B cell (primary cell): ENCODE measurements at regions of chr14 and their contacts with region 1.

Region 1: GRCh38 chr14:29927376-29928116 is at the start of gene PRKD1:
- DNase-seq: peak; percentile 30
- ATAC-seq: peak; percentile 81
- H3K4me3 ChIP-seq: peak within 1 kb of the TSS in 3 of 5 experiments; percentile 34 to 48 (median 43)
- H3K4me3 Mint-ChIP-seq: peak within 1 kb of the TSS; percentile 91
- H3K27ac ChIP-seq: no peak within 1 kb of the TSS
- H3K27ac Mint-ChIP-seq: peak within 1 kb of the TSS; percentile 80
- H3K4me1 ChIP-seq: peaks cover 6 to 9% of the 10 kb centered on the region in 2 donors
- H3K4me1 Mint-ChIP-seq: peaks cover 10% of the 10 kb centered on the region
- H3K27me3 ChIP-seq: peaks cover 0 to 25% (median 9%) of the 10 kb centered on the region in 4 experiments
- H3K27me3 Mint-ChIP-seq: peaks cover 31% of the 10 kb centered on the region
- CTCF ChIP-seq: peak; percentile 23
- total RNA-seq, gene PRKD1: 3.3 and 4.3 TPM in 2 replicates

Region 2: DNA sequence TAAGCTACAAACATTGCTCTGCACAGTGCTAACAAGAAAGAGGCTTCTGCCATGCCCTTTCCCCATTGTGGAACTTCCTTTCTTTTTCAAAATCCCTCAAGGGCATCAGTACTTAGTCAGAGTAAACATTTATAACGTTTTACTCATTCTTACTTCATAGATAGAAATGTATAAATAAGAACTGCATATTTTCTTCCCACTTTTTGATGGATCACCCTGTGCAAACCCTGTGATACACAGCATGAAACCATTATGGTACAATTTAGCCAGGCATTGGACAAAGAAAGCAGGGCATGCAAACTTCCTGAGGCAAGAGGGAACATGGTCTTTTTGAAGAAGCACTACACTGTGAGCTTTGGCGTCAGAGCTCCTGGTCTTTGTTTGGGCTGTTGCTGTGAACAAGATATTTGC is 1274.7 kb before region 1 on chr14:
- CTCF ChIA-PET with region 1: no interaction called
- POLR2A ChIA-PET with region 1: no interaction called
- intact Hi-C with region 1: no loop called
- DNase-seq: no peak
- ATAC-seq: no peak
- H3K4me3 ChIP-seq: no peak overlapping the region
- H3K4me3 Mint-ChIP-seq: no peak overlapping the region
- H3K27ac ChIP-seq: no peak overlapping the region
- H3K27ac Mint-ChIP-seq: no peak overlapping the region
- H3K4me1 ChIP-seq: no peaks in the 10 kb centered on the region
- H3K4me1 Mint-ChIP-seq: no peaks in the 10 kb centered on the region
- H3K27me3 ChIP-seq: no peaks in the 10 kb centered on the region
- H3K27me3 Mint-ChIP-seq: no peaks in the 10 kb centered on the region
- CTCF ChIP-seq: no peak

Region 3: GRCh38 chr14:29548948-29549370 is 378.6 kb before region 1 on chr14:
- CTCF ChIA-PET with region 1: no interaction called
- POLR2A ChIA-PET with region 1: no interaction called
- intact Hi-C with region 1: loop called (anchors 5 kb)
- DNase-seq: peak; percentile 31
- ATAC-seq: peak; percentile 36
- H3K4me3 ChIP-seq: no peak overlapping the region
- H3K4me3 Mint-ChIP-seq: no peak overlapping the region
- H3K27ac ChIP-seq: no peak overlapping the region
- H3K27ac Mint-ChIP-seq: no peak overlapping the region
- H3K4me1 ChIP-seq: no peaks in the 10 kb centered on the region
- H3K4me1 Mint-ChIP-seq: no peaks in the 10 kb centered on the region
- H3K27me3 ChIP-seq: no peaks in the 10 kb centered on the region
- H3K27me3 Mint-ChIP-seq: peaks cover 3% of the 10 kb centered on the region
- CTCF ChIP-seq: peak; percentile 69

Region 4: GRCh38 chr14:29576927-29577326 is 350.6 kb before region 1 on chr14:
- CTCF ChIA-PET with region 1: no interaction called
- POLR2A ChIA-PET with region 1: no interaction called
- intact Hi-C with region 1: loop called (anchors 10 kb)
- DNase-seq: no peak
- ATAC-seq: no peak
- H3K4me3 ChIP-seq: no peak overlapping the region
- H3K4me3 Mint-ChIP-seq: no peak overlapping the region
- H3K27ac ChIP-seq: no peak overlapping the region
- H3K27ac Mint-ChIP-seq: no peak overlapping the region
- H3K4me1 ChIP-seq: no peaks in the 10 kb centered on the region
- H3K4me1 Mint-ChIP-seq: peaks cover 16% of the 10 kb centered on the region
- H3K27me3 ChIP-seq: no peaks in the 10 kb centered on the region
- H3K27me3 Mint-ChIP-seq: no peaks in the 10 kb centered on the region
- CTCF ChIP-seq: no peak

Region 5: GRCh38 chr14:29788093-29788492 is 139.5 kb before region 1 on chr14:
- CTCF ChIA-PET with region 1: no interaction called
- POLR2A ChIA-PET with region 1: no interaction called
- intact Hi-C with region 1: no loop called
- DNase-seq: no peak
- ATAC-seq: no peak
- H3K4me3 ChIP-seq: no peak overlapping the region
- H3K4me3 Mint-ChIP-seq: no peak overlapping the region
- H3K27ac ChIP-seq: no peak overlapping the region
- H3K27ac Mint-ChIP-seq: no peak overlapping the region
- H3K4me1 ChIP-seq: no peaks in the 10 kb centered on the region
- H3K4me1 Mint-ChIP-seq: no peaks in the 10 kb centered on the region
- H3K27me3 ChIP-seq: no peaks in the 10 kb centered on the region
- H3K27me3 Mint-ChIP-seq: no peaks in the 10 kb centered on the region
- CTCF ChIP-seq: no peak

Region 6: GRCh38 chr14:29799464-29800095 is 128.0 kb before region 1 on chr14:
- CTCF ChIA-PET with region 1: no interaction called
- POLR2A ChIA-PET with region 1: no interaction called
- intact Hi-C with region 1: loop called (anchors 5 kb)
- DNase-seq: peak; percentile 26
- ATAC-seq: peak; percentile 84
- H3K4me3 ChIP-seq: no peak overlapping the region
- H3K4me3 Mint-ChIP-seq: peak overlapping the region; percentile 69
- H3K27ac ChIP-seq: no peak overlapping the region
- H3K27ac Mint-ChIP-seq: no peak overlapping the region
- H3K4me1 ChIP-seq: no peaks in the 10 kb centered on the region
- H3K4me1 Mint-ChIP-seq: peaks cover 17% of the 10 kb centered on the region
- H3K27me3 ChIP-seq: no peaks in the 10 kb centered on the region
- H3K27me3 Mint-ChIP-seq: no peaks in the 10 kb centered on the region
- CTCF ChIP-seq: no peak

Region 7: GRCh38 chr14:29858299-29858698 is 69.2 kb before region 1 on chr14:
- CTCF ChIA-PET with region 1: no interaction called
- POLR2A ChIA-PET with region 1: no interaction called
- intact Hi-C with region 1: loop called (anchors 1 kb)
- DNase-seq: peak; percentile 63
- ATAC-seq: peak; percentile 84
- H3K4me3 ChIP-seq: peak overlapping the region in 1 of 5 experiments; percentile 9
- H3K4me3 Mint-ChIP-seq: peak overlapping the region; percentile 73
- H3K27ac ChIP-seq: peak overlapping the region in 1 of 2 donors; percentile 74
- H3K27ac Mint-ChIP-seq: peak overlapping the region; percentile 90
- H3K4me1 ChIP-seq: peaks cover 9 to 20% of the 10 kb centered on the region in 2 donors
- H3K4me1 Mint-ChIP-seq: peaks cover 39% of the 10 kb centered on the region
- H3K27me3 ChIP-seq: no peaks in the 10 kb centered on the region
- H3K27me3 Mint-ChIP-seq: no peaks in the 10 kb centered on the region
- CTCF ChIP-seq: no peak